GM12878 (cell line): ENCODE measurements at regions of chr21 and their contacts with region 1.

Region 1: GRCh38 chr21:37563641-37564340 is 197.2 kb downstream of the DYRK1A start:
- DNase-seq: peak; percentile 70
- ATAC-seq: peak; percentile 97
- H3K4me3 ChIP-seq: peak overlapping the region; percentile 76
- H3K27ac ChIP-seq: peak overlapping the region; percentile 79
- H3K4me1 ChIP-seq: peaks cover 17% of the 10 kb centered on the region
- H3K27me3 ChIP-seq: no peaks in the 10 kb centered on the region
- CTCF ChIP-seq: peak; percentile 39 to 48 (median 41); a peak in 4 of 6 replicates
- EP300 ChIP-seq: no peak
- POLR2A ChIP-seq: peak; percentile 92
- RAD21 ChIP-seq: peak; percentile 23; the same call in 1 of the 2 replicates

Region 2: DNA sequence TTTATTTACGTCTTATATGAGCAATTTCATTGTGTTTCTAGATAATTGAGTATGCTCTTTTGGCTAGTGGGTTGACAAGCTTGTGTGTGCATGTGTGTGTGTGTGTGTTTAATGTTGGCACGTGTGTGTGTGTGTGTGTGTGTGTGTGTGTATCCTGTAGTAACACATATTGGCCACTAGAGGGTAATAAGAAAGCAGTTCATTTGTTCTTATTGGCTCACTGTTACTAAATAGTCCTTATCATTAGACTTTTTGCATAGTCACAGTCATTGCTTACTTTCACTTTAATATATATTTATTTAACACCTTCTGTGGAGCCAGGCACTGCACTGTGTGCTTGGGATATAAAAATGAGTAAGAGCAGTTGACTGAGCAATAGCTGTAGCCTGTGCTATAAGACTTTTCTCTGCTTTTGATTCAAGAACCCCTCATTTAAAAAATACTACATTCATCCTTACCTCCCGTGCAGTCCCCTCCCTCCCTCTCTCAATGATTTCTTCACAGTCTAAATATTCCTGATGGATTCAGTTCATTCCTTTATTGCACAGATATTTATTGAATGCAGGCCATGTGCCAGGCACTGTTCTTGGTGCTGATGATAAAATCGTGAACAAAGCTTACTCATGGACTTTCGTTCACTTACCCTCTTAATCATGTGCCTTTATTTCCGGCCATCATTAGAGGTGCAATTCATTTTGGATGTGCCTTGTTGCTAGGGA is 100.5 kb before region 1 on chr21:
- CTCF ChIA-PET with region 1: interaction called, 13 read pairs
- POLR2A ChIA-PET with region 1: no interaction called
- RAD21 ChIA-PET with region 1: interaction called, 15 read pairs
- SMC1A ChIA-PET with region 1: interaction called, 9 read pairs
- in situ Hi-C with region 1: no loop called
- intact Hi-C with region 1: no loop called
- DNase-seq: peak; percentile 12
- ATAC-seq: peak; percentile 76
- H3K4me3 ChIP-seq: no peak overlapping the region
- H3K27ac ChIP-seq: no peak overlapping the region
- H3K4me1 ChIP-seq: peaks cover 11% of the 10 kb centered on the region
- H3K27me3 ChIP-seq: no peaks in the 10 kb centered on the region
- CTCF ChIP-seq: peak; percentile 65 to 79 (median 76)
- EP300 ChIP-seq: no peak
- POLR2A ChIP-seq: no peak
- RAD21 ChIP-seq: peak; percentile 46; the same call in 1 of the 2 replicates

Region 3: GRCh38 chr21:37496972-37497371 is 66.8 kb before region 1 on chr21:
- CTCF ChIA-PET with region 1: interaction called, 11 read pairs
- POLR2A ChIA-PET with region 1: no interaction called
- RAD21 ChIA-PET with region 1: no interaction called
- SMC1A ChIA-PET with region 1: interaction called, 4 read pairs
- in situ Hi-C with region 1: no loop called
- intact Hi-C with region 1: no loop called
- DNase-seq: no peak
- ATAC-seq: peak; percentile 35; the same call in 1 of the 3 replicates
- H3K4me3 ChIP-seq: no peak overlapping the region
- H3K27ac ChIP-seq: no peak overlapping the region
- H3K4me1 ChIP-seq: no peaks in the 10 kb centered on the region
- H3K27me3 ChIP-seq: no peaks in the 10 kb centered on the region
- CTCF ChIP-seq: peak in 1 of 3 experiments; percentile 19; a peak in 1 of 6 replicates
- EP300 ChIP-seq: no peak
- POLR2A ChIP-seq: no peak
- RAD21 ChIP-seq: peak; percentile 25; the same call in 1 of the 2 replicates

Region 4: DNA sequence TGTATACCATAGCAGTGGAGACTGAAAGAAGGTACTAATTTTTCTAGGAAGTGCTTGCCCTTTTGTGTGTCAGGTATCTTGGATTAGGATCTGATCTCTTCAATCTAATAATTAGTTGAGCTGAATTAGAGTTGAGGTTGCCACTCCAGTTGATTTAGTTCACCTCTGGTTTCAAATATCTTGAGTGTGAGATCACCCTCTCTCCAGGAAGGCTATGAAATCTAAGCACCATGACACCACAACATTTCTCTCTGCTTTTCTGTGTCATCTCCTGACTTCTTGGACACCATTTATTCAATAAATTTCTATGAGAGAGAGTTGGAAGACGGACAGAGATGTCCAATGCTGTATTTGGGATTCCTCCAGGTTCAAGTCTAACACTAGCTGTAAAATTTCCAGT is 15.6 kb after region 1 on chr21:
- CTCF ChIA-PET with region 1: interaction called, 10 read pairs
- POLR2A ChIA-PET with region 1: no interaction called
- RAD21 ChIA-PET with region 1: interaction called, 3 read pairs
- SMC1A ChIA-PET with region 1: interaction called, 3 read pairs
- in situ Hi-C with region 1: no loop called
- intact Hi-C with region 1: no loop called
- DNase-seq: no peak
- ATAC-seq: no peak
- H3K4me3 ChIP-seq: no peak overlapping the region
- H3K27ac ChIP-seq: no peak overlapping the region
- H3K4me1 ChIP-seq: no peaks in the 10 kb centered on the region
- H3K27me3 ChIP-seq: no peaks in the 10 kb centered on the region
- CTCF ChIP-seq: no peak
- EP300 ChIP-seq: no peak
- POLR2A ChIP-seq: no peak
- RAD21 ChIP-seq: no peak

Region 5: GRCh38 chr21:37631319-37632117 is 67.7 kb after region 1 on chr21:
- CTCF ChIA-PET with region 1: interaction called, 4 read pairs
- POLR2A ChIA-PET with region 1: interaction called, 9 read pairs
- RAD21 ChIA-PET with region 1: interaction called, 3 read pairs
- SMC1A ChIA-PET with region 1: interaction called, 3 read pairs
- in situ Hi-C with region 1: no loop called
- intact Hi-C with region 1: loop called (anchors 5 kb)
- DNase-seq: peak; percentile 76
- ATAC-seq: peak; percentile 97
- H3K4me3 ChIP-seq: 0 out of 2 replicates have a peak overlapping the region, but pooled peaks have one; percentile 26
- H3K27ac ChIP-seq: peak overlapping the region; percentile 76
- H3K4me1 ChIP-seq: peaks cover 4% of the 10 kb centered on the region
- H3K27me3 ChIP-seq: no peaks in the 10 kb centered on the region
- CTCF ChIP-seq: no peak
- EP300 ChIP-seq: peak in 1 of 2 experiments; percentile 57; a peak in 1 of 4 replicates
- POLR2A ChIP-seq: no peak
- RAD21 ChIP-seq: no peak

Region 6: GRCh38 chr21:37642493-37642892 is 78.7 kb after region 1 on chr21:
- CTCF ChIA-PET with region 1: interaction called, 46 read pairs
- POLR2A ChIA-PET with region 1: interaction called, 6 read pairs
- RAD21 ChIA-PET with region 1: interaction called, 16 read pairs
- SMC1A ChIA-PET with region 1: interaction called, 7 read pairs
- in situ Hi-C with region 1: no loop called
- intact Hi-C with region 1: no loop called
- DNase-seq: no peak
- ATAC-seq: peak; percentile 94
- H3K4me3 ChIP-seq: no peak overlapping the region
- H3K27ac ChIP-seq: no peak overlapping the region
- H3K4me1 ChIP-seq: no peaks in the 10 kb centered on the region
- H3K27me3 ChIP-seq: 0 out of 4 replicates have a peak, but pooled peaks cover 0 to under 1% of the 10 kb centered on the region in 2 experiments
- CTCF ChIP-seq: peak; percentile 36 to 65 (median 45); a peak in 4 of 6 replicates
- EP300 ChIP-seq: no peak
- POLR2A ChIP-seq: no peak
- RAD21 ChIP-seq: peak; percentile 75